ENCODE measurements at regions of chr1 and their contacts with region 1.

Region 1: GRCh38 chr1:52697795-52698674 is at the start of gene COA7:
- DNase-seq: peak; percentile 90
- H3K4me3 ChIP-seq: peak within 1 kb of the TSS; percentile 54 to 67 (median 62)
- H3K27ac ChIP-seq: peak within 1 kb of the TSS; percentile 87 to 92 (median 90)
- H3K4me1 ChIP-seq: peaks cover 0 to 32% (median 18%) of the 10 kb centered on the region in 4 donors
- H3K27me3 ChIP-seq: no peaks in the 10 kb centered on the region
- CTCF ChIP-seq: no peak
- EP300 ChIP-seq: no peak
- POLR2A ChIP-seq: no peak
- total RNA-seq, gene COA7: 2.2 to 12.7 (median 9.1) TPM

Region 2: DNA sequence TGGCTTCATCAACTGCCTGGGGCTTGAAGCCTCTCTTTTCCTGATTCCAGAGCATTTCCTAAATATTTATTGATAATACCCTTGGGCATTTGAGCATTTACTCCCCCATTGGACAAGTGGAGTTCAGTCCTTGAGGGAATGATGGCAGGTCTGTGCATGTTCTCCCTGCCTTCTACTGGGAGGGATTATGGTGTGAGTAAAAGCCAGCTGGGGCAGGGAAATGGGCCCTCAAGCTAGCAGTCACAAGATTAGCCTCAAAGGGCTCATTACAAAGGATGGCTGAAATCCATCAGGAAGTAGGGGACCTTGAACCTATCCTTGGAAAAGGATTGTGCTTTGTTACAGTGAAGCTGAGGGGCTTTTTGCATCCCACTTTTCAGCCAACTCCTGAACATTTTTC is 1105.3 kb before region 1 on chr1:
- in situ Hi-C with region 1: no loop called
- intact Hi-C with region 1: no loop called
- DNase-seq: no peak
- H3K4me3 ChIP-seq: no peak overlapping the region
- H3K27ac ChIP-seq: no peak overlapping the region
- H3K4me1 ChIP-seq: no peaks in the 10 kb centered on the region
- H3K27me3 ChIP-seq: no peaks in the 10 kb centered on the region
- CTCF ChIP-seq: no peak
- EP300 ChIP-seq: no peak
- POLR2A ChIP-seq: no peak

Region 3: GRCh38 chr1:51784997-51785421 is 913.0 kb before region 1 on chr1:
- in situ Hi-C with region 1: no loop called
- intact Hi-C with region 1: no loop called
- DNase-seq: no peak
- H3K4me3 ChIP-seq: no peak overlapping the region
- H3K27ac ChIP-seq: no peak overlapping the region
- H3K4me1 ChIP-seq: no peaks in the 10 kb centered on the region
- H3K27me3 ChIP-seq: no peaks in the 10 kb centered on the region
- CTCF ChIP-seq: no peak
- EP300 ChIP-seq: no peak
- POLR2A ChIP-seq: no peak

Region 4: DNA sequence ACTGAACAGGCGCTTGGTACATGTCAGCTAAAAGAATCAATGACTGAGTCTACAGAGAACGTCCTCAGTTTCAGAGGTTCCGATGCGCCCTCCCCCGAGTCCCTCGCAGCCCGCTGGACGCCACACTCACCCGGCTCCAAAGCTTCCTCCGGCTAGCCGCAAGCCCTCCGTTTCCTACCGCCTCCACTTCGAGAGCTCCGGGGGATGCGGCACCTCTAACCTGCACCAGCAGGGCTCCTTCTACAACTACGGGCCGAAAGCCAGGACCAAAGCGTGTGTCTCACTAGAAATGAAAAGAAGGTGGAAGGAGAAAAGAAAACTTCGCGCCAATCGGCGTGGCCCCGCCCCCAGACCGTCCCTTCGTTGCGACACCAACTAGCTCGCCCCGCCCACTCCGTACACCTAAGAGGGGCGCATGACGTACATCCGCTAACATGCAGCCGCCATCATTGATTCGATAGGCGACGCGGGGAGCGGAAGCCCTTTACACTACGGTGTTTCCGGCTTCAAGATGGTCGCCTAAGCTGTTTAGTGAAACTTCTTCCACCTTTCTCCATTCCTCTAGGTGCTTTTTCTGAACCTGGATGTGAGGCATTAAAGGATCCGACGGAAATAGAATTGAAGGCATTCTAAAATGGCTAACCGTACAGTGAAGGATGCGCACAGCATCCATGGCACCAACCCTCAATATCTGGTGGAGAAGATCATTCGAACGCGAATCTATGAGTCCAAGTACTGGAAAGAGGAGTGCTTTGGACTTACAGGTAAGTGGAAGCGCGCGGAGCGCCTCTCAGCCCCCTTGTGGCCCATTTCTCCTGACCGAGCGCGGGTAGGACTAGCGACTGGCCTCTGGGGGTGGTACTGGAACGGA is 293.7 kb before region 1 on chr1 and contains the starts of genes ORC1 and PRPF38A:
- in situ Hi-C with region 1: loop called in 2 of 4 experiments (anchors 25 kb)
- intact Hi-C with region 1: no loop called
- DNase-seq: peak; percentile 99
- H3K4me3 ChIP-seq: peak within 1 kb of the TSS; percentile 63 to 81 (median 69)
- H3K27ac ChIP-seq: peak within 1 kb of the TSS; percentile 91 to 97 (median 92)
- H3K4me1 ChIP-seq: peaks cover 14 to 27% (median 19%) of the 10 kb centered on the region in 4 donors
- H3K27me3 ChIP-seq: no peaks in the 10 kb centered on the region
- CTCF ChIP-seq: peak; percentile 45 to 88 (median 50)
- EP300 ChIP-seq: no peak
- POLR2A ChIP-seq: peak; percentile 80
- total RNA-seq, gene ORC1: 1.00 to 1.7 (median 1.6) TPM in 3 of 4 donors, not detected in the other
- total RNA-seq, gene PRPF38A: 4.0 to 25.5 (median 20.1) TPM

Region 5: GRCh38 chr1:52426371-52426770 is 271.7 kb before region 1 on chr1:
- in situ Hi-C with region 1: loop called in 3 of 4 experiments (anchors 25 kb)
- intact Hi-C with region 1: no loop called
- DNase-seq: no peak
- H3K4me3 ChIP-seq: no peak overlapping the region
- H3K27ac ChIP-seq: no peak overlapping the region
- H3K4me1 ChIP-seq: no peaks in the 10 kb centered on the region
- H3K27me3 ChIP-seq: no peaks in the 10 kb centered on the region
- CTCF ChIP-seq: no peak
- EP300 ChIP-seq: no peak
- POLR2A ChIP-seq: no peak

Measured in transverse colon (tissue), 4 donors.